HAP-1 (cell line): ENCODE measurements at regions of chr4 and their contacts with region 1.

Region 1: DNA sequence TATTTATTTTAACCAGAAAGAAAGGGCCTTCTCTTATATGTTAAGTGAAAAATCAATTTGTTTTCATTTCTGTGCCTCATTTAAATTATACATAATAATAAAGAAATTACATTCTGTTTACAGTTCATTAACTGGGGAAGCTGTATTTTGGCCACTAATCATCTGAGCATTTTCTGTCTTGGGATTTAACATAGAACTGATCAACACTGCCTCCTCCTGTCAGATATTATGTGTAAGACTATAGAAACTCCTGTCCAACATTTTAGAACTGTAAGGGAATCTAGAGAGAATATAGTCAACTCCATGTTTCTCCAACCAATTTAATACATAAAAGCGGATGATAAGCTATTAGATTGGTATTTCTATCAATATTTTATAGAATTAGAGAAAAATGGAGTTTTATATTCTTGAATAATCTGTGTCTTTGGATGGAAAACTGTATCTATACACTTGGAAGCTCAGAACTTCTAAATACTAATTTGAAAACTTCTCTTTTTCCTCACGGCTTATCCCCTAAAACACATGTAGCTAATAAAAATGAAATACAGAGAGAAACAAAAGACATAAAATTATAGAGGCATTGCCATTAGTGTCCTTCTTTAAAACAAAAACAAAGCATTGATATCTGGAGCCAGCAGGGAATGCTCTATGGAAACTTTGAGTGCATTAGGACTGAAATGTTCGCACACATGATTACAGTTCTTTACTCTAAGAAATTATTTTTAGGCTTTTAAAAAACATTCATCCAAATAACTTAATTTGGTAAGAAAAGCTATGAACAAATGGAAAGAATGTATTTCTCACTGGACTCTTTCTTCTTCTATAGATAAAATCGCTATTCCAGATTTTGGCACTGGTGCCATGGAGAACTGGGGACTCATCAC is 33.1 kb downstream of the ENPEP start:
- DNase-seq: peak in 1 of 2 experiments; percentile 69
- H3K4me3 ChIP-seq: no peak overlapping the region
- H3K4me1 ChIP-seq: no peaks in the 10 kb centered on the region
- H3K27me3 ChIP-seq: no peaks in the 10 kb centered on the region

Region 2: GRCh38 chr4:110310795-110311194 is 198.3 kb before region 1 on chr4:
- in situ Hi-C with region 1: loop called (anchors 5 kb)
- DNase-seq: no peak
- H3K4me3 ChIP-seq: no peak overlapping the region
- H3K4me1 ChIP-seq: peaks cover 7% of the 10 kb centered on the region; the same call in 1 of the 2 replicates
- H3K27me3 ChIP-seq: no peaks in the 10 kb centered on the region